Heart left ventricle (tissue), 16 donors: ENCODE measurements at regions of chr17 and their contacts with region 1.

Region 1: DNA sequence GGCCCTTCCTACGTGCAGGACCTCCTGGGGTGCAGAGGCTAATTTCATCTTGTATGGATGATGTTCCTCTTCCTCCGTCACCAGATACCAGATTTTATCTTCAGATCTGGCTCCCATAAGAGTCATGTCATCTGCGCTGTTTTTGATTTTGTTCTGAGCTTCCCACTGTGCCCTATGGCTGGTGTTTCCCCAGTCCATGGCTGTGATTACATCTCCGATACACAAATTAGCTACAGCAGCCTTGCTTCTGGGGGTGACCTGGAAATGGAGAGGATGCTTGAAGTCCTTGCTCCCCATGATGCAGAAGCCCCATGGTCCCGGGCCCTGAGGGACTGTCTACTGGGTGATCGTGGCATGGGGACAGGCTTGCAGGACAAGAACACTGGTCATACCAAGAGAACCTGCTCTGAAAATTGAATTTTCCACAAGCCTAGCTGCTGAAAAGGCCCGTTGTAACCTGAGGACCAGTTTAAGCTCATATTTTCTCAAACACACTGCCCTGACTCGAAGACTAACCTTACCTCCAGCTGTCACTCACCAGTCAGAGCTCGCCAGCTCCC is 69.0 kb downstream of the KCNJ12 start:
- DNase-seq: no peak
- ATAC-seq: no peak
- H3K4me3 ChIP-seq: no peak overlapping the region
- H3K27ac ChIP-seq: no peak overlapping the region
- H3K4me1 ChIP-seq: no peaks in the 10 kb centered on the region
- H3K27me3 ChIP-seq: no peaks in the 10 kb centered on the region
- CTCF ChIP-seq: no peak
- POLR2A ChIP-seq: no peak

Region 2: GRCh38 chr17:21376759-21377690 is 68.1 kb before region 1 on chr17:
- intact Hi-C with region 1: loop called in 1 of 10 experiments (anchors 5 kb)
- DNase-seq: no peak
- ATAC-seq: peak in 3 of 4 donors; percentile 12 to 52 (median 27)
- H3K4me3 ChIP-seq: peak overlapping the region; percentile 51 to 85 (median 59)
- H3K27ac ChIP-seq: peak overlapping the region in 10 of 12 donors; percentile 56 to 85 (median 68)
- H3K4me1 ChIP-seq: peaks cover 0 to 68% (median 26%) of the 10 kb centered on the region in 12 donors
- H3K27me3 ChIP-seq: peaks cover 0 to 31% (median 0%) of the 10 kb centered on the region in 9 donors
- CTCF ChIP-seq: no peak
- POLR2A ChIP-seq: no peak

Region 3: GRCh38 chr17:21495281-21495680 is 50.1 kb after region 1 on chr17:
- intact Hi-C with region 1: no loop called
- DNase-seq: no peak
- ATAC-seq: peak in 3 of 4 donors; percentile 30 to 37 (median 31)
- H3K4me3 ChIP-seq: no peak overlapping the region
- H3K27ac ChIP-seq: no peak overlapping the region
- H3K4me1 ChIP-seq: no peaks in the 10 kb centered on the region
- H3K27me3 ChIP-seq: peaks cover 0 to 6% (median 0%) of the 10 kb centered on the region in 9 donors
- CTCF ChIP-seq: no peak
- POLR2A ChIP-seq: no peak